Esophagus squamous epithelium (tissue), 5 donors: ENCODE measurements at regions of chr20 and their contacts with region 1.

Region 1: GRCh38 chr20:40689943-40690835 is 1.2 kb upstream of the MAFB start:
- DNase-seq: no peak
- H3K4me3 ChIP-seq: peak overlapping the region; percentile 70 to 84 (median 80)
- H3K27ac ChIP-seq: peak overlapping the region; percentile 94 to 98 (median 96)
- H3K4me1 ChIP-seq: peaks cover 9 to 59% (median 11%) of the 10 kb centered on the region in 3 donors
- H3K27me3 ChIP-seq: peaks cover 0 to 71% (median 4%) of the 10 kb centered on the region in 4 donors
- CTCF ChIP-seq: peak; percentile 72 to 97 (median 95)
- POLR2A ChIP-seq: peak in 1 of 4 donors; percentile 24

Region 2: GRCh38 chr20:40144581-40144980 is 545.6 kb before region 1 on chr20:
- intact Hi-C with region 1: loop called (anchors 10 kb)
- DNase-seq: no peak
- H3K4me3 ChIP-seq: no peak overlapping the region
- H3K27ac ChIP-seq: no peak overlapping the region
- H3K4me1 ChIP-seq: no peaks in the 10 kb centered on the region
- H3K27me3 ChIP-seq: no peaks in the 10 kb centered on the region
- CTCF ChIP-seq: no peak
- POLR2A ChIP-seq: no peak

Region 3: DNA sequence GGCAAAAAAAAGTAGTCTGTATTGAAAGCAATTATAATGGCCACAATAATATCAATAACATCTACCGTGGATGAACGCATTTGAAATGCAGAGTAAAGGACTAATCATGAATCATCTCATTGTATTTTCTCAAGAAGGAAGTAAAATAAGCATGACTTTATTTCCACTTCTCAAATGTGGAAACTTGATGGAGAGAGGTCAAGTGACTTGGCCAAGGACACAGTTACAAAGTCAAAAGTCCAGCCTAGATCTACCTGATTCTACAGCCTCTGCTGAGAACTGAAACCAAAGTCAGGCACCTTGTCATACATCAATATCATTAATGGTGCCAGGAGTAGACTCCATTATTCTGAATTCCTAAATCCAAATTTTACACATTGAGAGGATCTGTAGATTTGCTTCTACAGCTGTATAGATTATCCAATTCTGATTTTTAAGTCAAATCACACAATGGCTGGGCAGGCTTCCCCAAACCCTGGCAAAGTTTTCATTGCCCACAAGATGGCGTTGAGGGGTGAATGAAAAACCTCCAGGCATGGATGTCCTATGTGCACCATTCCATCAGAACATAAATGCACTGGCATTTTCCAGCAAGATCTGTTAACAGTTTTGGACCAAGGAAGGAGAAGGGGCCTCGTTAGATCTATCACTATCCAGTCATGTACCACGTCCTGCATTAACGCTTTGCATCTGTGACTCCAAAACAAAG is 424.2 kb before region 1 on chr20:
- intact Hi-C with region 1: loop called (anchors 10 kb)
- DNase-seq: no peak
- H3K4me3 ChIP-seq: no peak overlapping the region
- H3K27ac ChIP-seq: no peak overlapping the region
- H3K4me1 ChIP-seq: peaks cover 0 to 12% (median 0%) of the 10 kb centered on the region in 3 donors
- H3K27me3 ChIP-seq: no peaks in the 10 kb centered on the region
- CTCF ChIP-seq: peak in 5 of 6 experiments; percentile 33 to 59 (median 48)
- POLR2A ChIP-seq: no peak

Region 4: GRCh38 chr20:40286975-40287531 is 403.1 kb before region 1 on chr20:
- intact Hi-C with region 1: loop called (anchors 10 kb)
- DNase-seq: peak; percentile 26
- H3K4me3 ChIP-seq: no peak overlapping the region
- H3K27ac ChIP-seq: peak overlapping the region; percentile 41 to 84 (median 50)
- H3K4me1 ChIP-seq: peaks cover 24 to 62% (median 43%) of the 10 kb centered on the region in 3 donors
- H3K27me3 ChIP-seq: no peaks in the 10 kb centered on the region
- CTCF ChIP-seq: no peak
- POLR2A ChIP-seq: no peak

Region 5: DNA sequence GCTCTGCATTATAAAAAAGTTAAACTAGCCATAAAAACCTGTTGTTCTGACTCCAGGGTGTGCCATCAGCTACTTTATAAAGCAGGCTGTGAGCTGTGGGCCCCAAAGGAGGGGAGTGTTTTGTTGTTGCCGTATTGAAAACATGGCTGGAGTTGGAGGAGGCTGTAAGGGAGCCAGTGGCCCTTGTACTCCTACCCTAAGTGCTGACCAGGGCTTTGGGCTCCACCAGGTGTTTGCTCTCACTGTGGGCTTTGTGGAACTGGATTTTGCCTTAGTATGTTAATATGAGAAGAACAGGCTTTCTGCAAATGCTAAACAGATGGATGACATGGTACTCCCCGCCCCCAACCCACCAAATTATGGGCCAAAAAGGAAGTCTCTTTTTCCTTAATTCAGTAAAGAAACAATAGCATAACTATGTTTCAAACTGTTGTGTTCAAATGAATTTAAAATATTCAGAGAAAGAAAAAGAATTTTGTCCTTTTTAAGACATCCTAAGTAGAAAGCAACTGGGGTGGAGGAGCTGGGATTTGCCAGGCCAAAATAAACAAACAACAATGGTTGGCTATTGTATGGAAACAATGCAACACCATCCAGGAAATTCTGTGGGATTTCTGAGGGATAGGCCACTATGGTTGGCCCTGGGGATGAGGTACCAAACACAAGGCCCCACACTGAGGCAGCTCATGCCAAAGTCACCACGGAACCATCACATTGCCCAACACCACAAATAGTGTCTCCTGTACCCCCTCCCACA is 510.4 kb after region 1 on chr20:
- intact Hi-C with region 1: no loop called
- DNase-seq: no peak
- H3K4me3 ChIP-seq: no peak overlapping the region
- H3K27ac ChIP-seq: no peak overlapping the region
- H3K4me1 ChIP-seq: peaks cover 0 to 10% (median 0%) of the 10 kb centered on the region in 3 donors
- H3K27me3 ChIP-seq: no peaks in the 10 kb centered on the region
- CTCF ChIP-seq: no peak
- POLR2A ChIP-seq: no peak